ENCODE measurements at regions of chr1 and their contacts with region 1.

Region 1: DNA sequence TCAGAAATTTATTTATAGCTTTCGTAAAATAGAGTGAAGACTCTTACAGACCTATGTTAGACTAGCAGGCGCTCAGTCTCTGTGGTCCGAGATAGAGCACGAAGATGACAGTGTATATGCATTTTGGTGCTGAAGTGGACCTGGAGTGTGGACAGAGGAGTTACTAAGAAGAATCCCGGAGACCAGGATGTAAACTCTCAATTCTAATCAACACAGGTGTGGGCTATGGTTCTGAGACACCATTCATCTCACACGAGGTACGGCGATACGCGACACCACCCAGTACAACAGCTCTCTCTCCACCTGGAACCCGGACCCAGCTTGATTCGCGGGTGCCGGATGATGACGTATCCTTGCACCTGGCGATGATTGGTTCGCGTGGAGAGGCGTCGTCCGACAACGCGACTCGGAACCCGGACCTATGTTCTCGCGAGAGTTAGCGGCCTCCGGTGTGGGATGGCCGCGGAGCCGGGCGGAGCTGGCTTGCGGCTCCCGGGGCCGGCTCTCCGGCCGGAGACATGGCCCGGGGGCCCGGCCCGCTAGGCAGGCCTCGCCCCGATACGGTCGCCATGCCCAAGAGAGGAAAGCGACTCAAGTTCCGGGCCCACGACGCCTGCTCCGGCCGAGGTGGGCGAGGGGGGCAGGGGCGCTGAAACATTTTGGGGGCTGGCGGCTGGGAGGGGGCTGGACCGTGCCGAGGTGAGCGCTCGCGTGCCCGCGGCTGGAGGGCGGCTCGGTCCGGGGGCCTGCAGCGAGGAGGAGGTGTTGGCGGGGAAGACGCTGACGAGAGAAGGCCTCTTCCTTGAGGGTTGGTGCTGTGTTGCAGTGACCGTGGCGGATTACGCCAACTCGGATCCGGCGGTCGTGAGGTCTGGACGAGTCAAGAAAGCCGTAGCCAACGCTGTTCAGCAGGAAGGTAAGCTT is at the start of gene TMEM183A:
- DNase-seq: peak; percentile 87 to 98 (median 95)
- ATAC-seq: peak; percentile 90
- H3K4me3 ChIP-seq: peak within 1 kb of the TSS; percentile 92 to 97
- H3K4me3 Mint-ChIP-seq: peak within 1 kb of the TSS; percentile 97
- H3K27ac ChIP-seq: peak within 1 kb of the TSS; percentile 95 to 98
- H3K27ac Mint-ChIP-seq: peak within 1 kb of the TSS; percentile 98
- H3K4me1 ChIP-seq: peaks cover 19% of the 10 kb centered on the region
- H3K4me1 Mint-ChIP-seq: peaks cover 39% of the 10 kb centered on the region
- H3K27me3 ChIP-seq: no peaks in the 10 kb centered on the region
- H3K27me3 Mint-ChIP-seq: no peaks in the 10 kb centered on the region
- CTCF ChIP-seq: no peak
- total RNA-seq, gene TMEM183A: 201 to 214 TPM

Region 2: DNA sequence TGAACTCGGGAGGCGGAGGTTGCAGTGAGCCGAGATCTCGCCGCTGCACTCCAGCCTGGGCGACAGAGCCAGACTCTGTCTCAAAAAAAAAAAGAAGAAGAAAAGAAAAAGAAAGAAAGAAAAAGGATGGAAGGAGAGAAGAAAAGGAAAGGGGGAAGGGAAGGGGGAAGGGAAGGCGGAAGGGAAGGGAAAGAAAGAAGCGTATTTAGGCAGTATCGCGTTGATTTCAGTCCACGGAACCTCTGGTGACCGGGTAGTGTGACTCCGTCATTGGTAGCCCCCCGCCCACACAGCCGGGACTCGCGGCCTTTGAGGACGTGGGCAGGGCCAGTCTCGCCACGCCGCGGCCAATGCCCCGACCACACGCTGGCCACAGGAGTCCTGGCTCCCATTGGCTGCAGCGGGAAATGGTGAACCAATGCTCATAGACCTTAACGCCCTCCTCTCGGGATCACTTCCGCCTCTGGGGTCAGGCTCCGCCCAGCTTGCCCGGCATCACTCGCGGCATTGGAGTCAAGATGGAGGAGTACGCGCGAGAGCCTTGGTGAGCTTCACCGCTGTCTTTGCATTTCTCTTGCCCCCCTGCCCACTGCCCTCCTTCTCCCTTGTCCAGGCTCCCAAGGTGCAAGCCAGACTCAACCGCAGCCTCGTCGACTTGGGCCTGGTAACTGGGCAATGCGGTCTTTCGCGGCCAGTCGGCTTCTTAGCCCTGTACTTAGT is 1052.0 kb before region 1 on chr1 and contains the start of gene TIMM17A:
- CTCF ChIA-PET with region 1: no interaction called
- POLR2A ChIA-PET with region 1: no interaction called
- intact Hi-C with region 1: loop called in 1 of 2 experiments (anchors 10 kb)
- DNase-seq: peak; percentile 82 to 96 (median 93)
- ATAC-seq: peak; percentile 99
- H3K4me3 ChIP-seq: peak within 1 kb of the TSS; percentile 91 to 98
- H3K4me3 Mint-ChIP-seq: peak within 1 kb of the TSS; percentile 98
- H3K27ac ChIP-seq: peak within 1 kb of the TSS; percentile 86 to 94
- H3K27ac Mint-ChIP-seq: peak within 1 kb of the TSS; percentile 96
- H3K4me1 ChIP-seq: peaks cover 13% of the 10 kb centered on the region
- H3K4me1 Mint-ChIP-seq: peaks cover 31% of the 10 kb centered on the region
- H3K27me3 ChIP-seq: no peaks in the 10 kb centered on the region
- H3K27me3 Mint-ChIP-seq: no peaks in the 10 kb centered on the region
- CTCF ChIP-seq: no peak
- total RNA-seq, gene TIMM17A: 58.0 to 66.6 TPM

Region 3: GRCh38 chr1:202810615-202811295 is 196.5 kb before region 1 on chr1 and contains the start of gene PCAT6:
- CTCF ChIA-PET with region 1: no interaction called
- POLR2A ChIA-PET with region 1: no interaction called
- intact Hi-C with region 1: loop called in 1 of 2 experiments (anchors 5 kb)
- DNase-seq: peak; percentile 67 to 93 (median 84)
- ATAC-seq: peak; percentile 67
- H3K4me3 ChIP-seq: peak within 1 kb of the TSS; percentile 80 to 94
- H3K4me3 Mint-ChIP-seq: peak within 1 kb of the TSS; percentile 88
- H3K27ac ChIP-seq: peak within 1 kb of the TSS; percentile 51 to 72
- H3K27ac Mint-ChIP-seq: peak within 1 kb of the TSS; percentile 90
- H3K4me1 ChIP-seq: peaks cover 20% of the 10 kb centered on the region
- H3K4me1 Mint-ChIP-seq: peaks cover 34% of the 10 kb centered on the region
- H3K27me3 ChIP-seq: no peaks in the 10 kb centered on the region
- H3K27me3 Mint-ChIP-seq: no peaks in the 10 kb centered on the region
- CTCF ChIP-seq: no peak
- total RNA-seq, gene PCAT6: 0.92 to 1.6 TPM

Region 4: DNA sequence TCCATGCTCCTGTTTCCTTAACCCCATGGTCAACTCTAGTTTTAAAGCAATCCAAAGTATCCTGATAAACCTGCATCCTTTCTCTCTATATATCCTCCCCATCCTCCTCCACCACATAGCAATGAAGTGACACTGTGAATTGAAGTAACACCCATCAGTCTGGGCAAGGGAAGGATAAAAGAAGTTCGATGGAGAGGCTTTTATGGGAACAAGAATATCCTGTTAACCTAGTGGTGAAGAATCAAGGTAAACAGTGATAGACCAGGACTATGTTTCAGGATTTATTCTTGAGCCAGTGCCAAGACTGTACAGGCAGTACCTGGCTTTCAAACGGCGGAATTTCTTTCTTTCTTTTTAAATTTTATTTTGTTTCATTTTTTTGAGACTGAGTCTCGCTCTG is 135.8 kb before region 1 on chr1:
- CTCF ChIA-PET with region 1: no interaction called
- POLR2A ChIA-PET with region 1: no interaction called
- intact Hi-C with region 1: no loop called
- DNase-seq: no peak
- ATAC-seq: no peak
- H3K4me3 ChIP-seq: no peak overlapping the region
- H3K4me3 Mint-ChIP-seq: no peak overlapping the region
- H3K27ac ChIP-seq: no peak overlapping the region
- H3K27ac Mint-ChIP-seq: no peak overlapping the region
- H3K4me1 ChIP-seq: no peaks in the 10 kb centered on the region
- H3K4me1 Mint-ChIP-seq: no peaks in the 10 kb centered on the region
- H3K27me3 ChIP-seq: no peaks in the 10 kb centered on the region
- H3K27me3 Mint-ChIP-seq: peaks cover 8% of the 10 kb centered on the region
- CTCF ChIP-seq: no peak

Region 5: DNA sequence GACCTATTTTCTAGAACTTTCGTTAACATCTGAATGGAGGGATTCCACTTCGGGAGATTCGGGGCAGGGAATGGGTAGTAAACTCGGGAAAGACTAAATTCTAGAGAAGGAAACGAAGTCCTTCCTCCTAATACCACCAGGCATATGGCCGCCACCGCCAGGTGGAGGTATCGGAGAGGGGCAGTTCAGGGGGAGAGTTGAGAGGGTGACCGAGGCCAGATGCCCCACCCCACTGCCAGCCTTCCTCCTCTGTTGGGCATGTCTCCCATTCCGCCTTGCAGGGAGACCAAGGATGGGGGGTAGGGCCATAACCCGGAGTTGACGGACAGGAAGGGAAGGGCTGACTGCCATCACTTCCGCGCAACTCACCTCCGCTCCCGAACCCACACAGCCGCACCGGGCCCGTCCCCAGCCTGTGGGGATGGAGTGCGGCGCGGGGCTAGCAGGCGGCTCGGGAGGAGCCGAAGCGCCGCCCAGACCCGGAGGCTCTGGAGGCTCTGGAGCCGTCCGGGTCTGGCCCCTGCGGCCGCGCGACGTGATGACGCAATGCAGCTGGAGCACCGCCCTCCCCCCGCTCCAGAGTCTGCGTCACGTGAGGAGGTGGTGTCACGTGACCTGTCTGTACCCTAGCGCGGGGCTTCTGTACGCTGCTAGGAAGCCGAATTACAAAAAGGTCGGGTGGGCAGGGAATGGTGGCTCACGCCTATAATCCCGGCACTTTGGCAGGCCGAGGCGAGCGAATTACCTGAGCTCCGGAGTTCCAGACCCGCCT is 80.3 kb before region 1 on chr1 and contains the start of gene KLHL12:
- CTCF ChIA-PET with region 1: interaction called, 3 read pairs
- POLR2A ChIA-PET with region 1: interaction called, 11 read pairs
- intact Hi-C with region 1: loop called (anchors 1 kb)
- DNase-seq: peak; percentile 87 to 97 (median 95)
- ATAC-seq: peak; percentile 95
- H3K4me3 ChIP-seq: peak within 1 kb of the TSS; percentile 97 to 98
- H3K4me3 Mint-ChIP-seq: peak within 1 kb of the TSS; percentile 96
- H3K27ac ChIP-seq: peak within 1 kb of the TSS; percentile 95 to 97
- H3K27ac Mint-ChIP-seq: peak within 1 kb of the TSS; percentile 97
- H3K4me1 ChIP-seq: peaks cover 18% of the 10 kb centered on the region
- H3K4me1 Mint-ChIP-seq: peaks cover 31% of the 10 kb centered on the region
- H3K27me3 ChIP-seq: no peaks in the 10 kb centered on the region
- H3K27me3 Mint-ChIP-seq: no peaks in the 10 kb centered on the region
- CTCF ChIP-seq: peak; percentile 87
- total RNA-seq, gene KLHL12: 17.9 to 19.2 TPM

Region 6: DNA sequence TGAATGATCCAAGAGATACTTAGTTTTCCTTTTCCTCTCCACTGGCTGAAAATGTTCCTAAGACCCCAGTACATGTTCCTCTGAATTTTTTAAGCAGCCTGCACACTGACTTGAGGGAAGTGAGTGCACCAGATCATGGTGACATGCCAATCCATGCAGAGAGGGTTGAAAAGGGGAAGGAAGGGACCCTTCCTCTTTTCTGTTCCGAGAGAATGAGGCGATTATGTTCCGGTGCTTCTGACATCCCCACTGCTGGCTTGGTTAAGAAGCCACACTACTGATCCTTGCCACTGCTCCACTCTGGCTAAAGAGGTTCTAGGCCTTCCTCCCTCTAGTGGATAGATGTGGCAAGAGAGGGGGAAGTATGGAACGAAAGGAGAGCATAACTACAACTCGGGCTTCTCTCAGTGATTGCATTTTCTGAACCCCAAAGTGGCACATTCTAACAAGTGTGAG is 38.3 kb before region 1 on chr1:
- CTCF ChIA-PET with region 1: interaction called, 3 read pairs
- POLR2A ChIA-PET with region 1: interaction called, 12 read pairs
- intact Hi-C with region 1: loop called (anchors 1 to 2 kb)
- DNase-seq: peak in 4 of 9 experiments; percentile 14 to 64 (median 40)
- ATAC-seq: peak; percentile 19
- H3K4me3 ChIP-seq: no peak overlapping the region
- H3K4me3 Mint-ChIP-seq: peak overlapping the region; percentile 49
- H3K27ac ChIP-seq: no peak overlapping the region
- H3K27ac Mint-ChIP-seq: no peak overlapping the region
- H3K4me1 ChIP-seq: peaks cover 24% of the 10 kb centered on the region
- H3K4me1 Mint-ChIP-seq: peaks cover 32% of the 10 kb centered on the region
- H3K27me3 ChIP-seq: no peaks in the 10 kb centered on the region
- H3K27me3 Mint-ChIP-seq: no peaks in the 10 kb centered on the region
- CTCF ChIP-seq: peak; percentile 28

Region 7: DNA sequence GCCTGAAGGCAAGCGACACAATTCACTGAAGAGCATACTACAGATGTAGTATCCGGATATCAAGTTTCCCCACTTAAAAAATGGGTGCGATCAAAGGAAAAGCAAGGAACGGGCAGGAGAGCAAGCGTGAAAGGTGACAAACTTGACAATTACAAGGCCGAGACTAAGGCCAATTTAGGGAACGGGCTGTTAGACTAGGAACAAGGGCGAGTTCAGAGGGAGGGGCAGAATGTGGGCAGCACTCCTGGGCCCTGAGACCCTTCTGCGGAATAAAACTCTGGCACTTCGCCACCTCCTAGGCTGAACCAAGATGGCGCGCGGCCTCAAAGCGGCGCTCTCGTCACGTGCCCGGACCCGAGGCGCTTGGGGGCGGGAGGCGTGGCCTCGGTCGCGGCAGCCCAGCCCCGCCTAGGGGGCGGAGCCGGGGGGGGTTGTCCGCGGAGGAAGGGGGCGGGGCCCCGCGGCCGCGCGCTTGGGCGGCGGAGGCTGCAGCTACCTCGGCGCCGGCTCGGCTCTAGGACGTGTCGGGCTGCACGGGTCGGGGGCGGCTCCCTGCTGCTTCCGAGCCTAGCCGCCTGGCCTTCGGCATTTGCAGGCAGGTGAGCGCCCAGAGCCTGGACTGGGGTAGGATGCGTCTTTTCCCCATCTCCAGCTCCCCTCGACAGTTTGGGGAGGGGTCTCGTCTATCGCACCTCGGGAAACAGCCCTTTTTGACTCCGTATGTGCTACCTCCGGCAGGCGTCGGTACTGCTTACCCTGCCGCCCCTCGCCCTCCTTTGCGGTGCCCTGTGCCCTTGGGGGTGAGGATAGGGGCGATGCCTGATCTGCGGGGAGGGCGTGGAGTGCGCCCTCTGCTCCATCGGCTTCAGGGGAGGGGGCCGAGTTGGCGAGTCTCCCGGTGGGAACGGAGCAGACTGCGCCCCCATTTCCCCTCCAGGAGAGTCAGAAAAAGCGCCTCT is 19.1 kb after region 1 on chr1 and contains the start of gene PPFIA4:
- CTCF ChIA-PET with region 1: no interaction called
- POLR2A ChIA-PET with region 1: interaction called, 4 read pairs
- intact Hi-C with region 1: loop called (anchors 1 kb)
- DNase-seq: peak; percentile 77 to 93 (median 86)
- ATAC-seq: peak; percentile 94
- H3K4me3 ChIP-seq: peak within 1 kb of the TSS; percentile 79 to 98
- H3K4me3 Mint-ChIP-seq: peak within 1 kb of the TSS; percentile 79
- H3K27ac ChIP-seq: peak within 1 kb of the TSS; percentile 46 to 69
- H3K27ac Mint-ChIP-seq: peak within 1 kb of the TSS; percentile 56
- H3K4me1 ChIP-seq: peaks cover 11% of the 10 kb centered on the region
- H3K4me1 Mint-ChIP-seq: peaks cover 8% of the 10 kb centered on the region
- H3K27me3 ChIP-seq: peaks cover 0 to 2% of the 10 kb centered on the region in 2 experiments
- H3K27me3 Mint-ChIP-seq: no peaks in the 10 kb centered on the region
- CTCF ChIP-seq: no peak
- total RNA-seq, gene PPFIA4: 0.33 to 1.1 TPM

Measured in CD8-positive, alpha-beta T cell (primary cell).